Activated CD4-positive, alpha-beta T cell treated with anti-CD3 and anti-CD28 coated beads, Interleukin-2, amount 10 ng/mL, durations not matched to agents 24 days and 14 days (primary cell): ENCODE measurements at regions of chr14 and their contacts with region 1.

Region 1: GRCh38 chr14:21557084-21557901 is 22.6 kb downstream of the OR10G3 start:
- DNase-seq: peak; percentile 93
- H3K4me3 Mint-ChIP-seq: peak overlapping the region; percentile 41
- H3K27ac Mint-ChIP-seq: no peak overlapping the region
- H3K4me1 Mint-ChIP-seq: peaks cover 5% of the 10 kb centered on the region
- H3K27me3 Mint-ChIP-seq: no peaks in the 10 kb centered on the region

Region 2: DNA sequence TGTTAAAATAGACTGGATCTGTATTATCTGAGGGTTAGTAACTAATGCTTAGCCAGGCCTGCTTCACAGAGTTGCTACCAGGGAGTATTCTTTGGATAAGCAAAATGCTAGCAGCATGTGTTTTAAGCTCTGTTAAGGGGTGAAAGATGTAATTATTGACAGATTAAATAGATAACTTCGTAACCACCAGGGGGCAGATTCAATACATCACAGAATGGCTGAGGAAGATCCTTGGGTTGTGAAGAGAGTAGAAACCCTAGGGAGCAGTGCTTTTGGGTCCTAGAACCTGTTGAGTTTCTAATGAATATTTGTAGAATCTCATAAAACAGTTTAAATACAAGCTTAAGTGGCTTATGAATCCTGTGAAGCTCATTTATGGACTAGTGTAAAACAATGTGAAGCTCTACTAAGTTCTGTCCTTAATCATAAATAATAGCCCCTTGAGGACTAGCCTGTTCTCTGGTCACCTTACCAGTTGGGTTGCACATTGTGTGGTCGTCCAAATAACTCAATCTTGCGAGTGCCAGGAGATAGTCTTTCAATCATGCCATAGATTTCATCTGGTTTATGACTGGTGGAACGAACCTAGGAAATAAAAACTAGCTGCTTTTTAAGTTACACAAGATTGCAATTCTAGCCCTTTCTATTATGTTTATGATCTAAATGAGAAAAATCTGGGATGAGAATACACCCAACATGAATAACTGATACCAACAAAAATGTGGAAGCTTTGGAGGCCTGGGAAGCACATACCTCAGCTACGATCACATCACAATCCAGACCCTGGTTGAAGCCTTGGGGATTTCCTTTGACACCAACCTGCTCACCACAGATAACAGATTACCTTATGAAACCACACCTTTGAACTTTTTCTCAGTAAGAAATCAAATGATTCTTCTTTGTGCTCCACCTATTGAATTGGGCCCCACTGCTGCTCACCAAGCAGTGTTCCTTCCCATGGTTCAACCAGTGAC is 58.5 kb before region 1 on chr14:
- intact Hi-C with region 1: loop called (anchors 1 kb)
- DNase-seq: peak; percentile 80
- H3K4me3 Mint-ChIP-seq: peak overlapping the region; percentile 12
- H3K27ac Mint-ChIP-seq: peak overlapping the region; percentile 56
- H3K4me1 Mint-ChIP-seq: peaks cover 28% of the 10 kb centered on the region
- H3K27me3 Mint-ChIP-seq: no peaks in the 10 kb centered on the region